ENCODE measurements at regions of chr3 and their contacts with region 1.

Region 1: DNA sequence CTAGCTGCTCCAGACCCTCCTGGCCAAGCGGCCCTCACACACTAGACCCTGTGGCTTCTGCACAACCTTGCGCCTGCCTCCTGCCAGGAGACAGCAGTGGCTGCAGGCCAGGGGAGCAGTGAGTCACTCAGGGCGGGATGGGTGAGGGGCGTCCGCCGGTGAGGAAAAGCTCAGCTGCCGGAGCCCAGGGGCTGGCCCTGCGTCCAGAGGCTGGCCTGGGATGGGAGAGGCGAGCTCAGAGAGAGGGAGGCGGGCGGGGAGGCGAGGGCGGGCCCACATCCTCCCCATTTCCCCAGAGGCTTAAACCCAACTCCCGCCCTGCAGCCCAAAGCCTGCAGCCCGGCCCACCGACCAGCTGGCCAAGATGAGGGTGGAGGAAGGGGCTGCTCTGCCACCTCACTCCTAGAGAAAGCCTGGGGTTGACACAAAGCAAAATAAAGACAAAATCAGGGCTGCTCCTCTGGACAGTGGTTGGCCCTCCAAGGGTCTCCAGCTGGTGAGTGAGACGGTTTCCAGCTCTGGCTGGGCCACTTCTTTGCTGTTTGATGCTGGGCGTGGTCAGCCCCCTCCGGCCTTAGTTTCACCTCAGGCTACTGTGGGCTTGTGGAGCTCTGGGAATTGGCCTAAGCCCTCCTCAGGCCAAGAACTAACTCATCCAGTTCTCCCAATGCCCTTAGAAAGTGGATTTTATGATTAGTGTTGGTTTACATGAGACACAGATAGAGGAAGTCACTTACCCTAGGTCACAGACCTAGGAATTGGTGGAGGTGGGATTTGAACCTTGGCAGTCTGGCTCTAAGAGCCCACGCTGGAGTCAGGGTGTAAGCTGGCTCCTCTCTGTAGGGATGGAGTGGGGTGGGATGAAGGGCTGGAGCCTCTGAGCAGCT is 50.6 kb downstream of the IQSEC1 start:
- DNase-seq: peak; percentile 70
- ATAC-seq: peak; percentile 57
- H3K4me3 Mint-ChIP-seq: peak overlapping the region; percentile 100
- H3K27ac Mint-ChIP-seq: peak overlapping the region; percentile 94
- H3K4me1 Mint-ChIP-seq: peaks cover 81% of the 10 kb centered on the region
- H3K27me3 Mint-ChIP-seq: no peaks in the 10 kb centered on the region
- CTCF ChIP-seq: no peak

Region 2: GRCh38 chr3:12591997-12592715 is 430.4 kb before region 1 on chr3:
- CTCF ChIA-PET with region 1: no interaction called
- POLR2A ChIA-PET with region 1: no interaction called
- intact Hi-C with region 1: no loop called
- DNase-seq: no peak
- ATAC-seq: no peak
- H3K4me3 Mint-ChIP-seq: no peak overlapping the region
- H3K27ac Mint-ChIP-seq: no peak overlapping the region
- H3K4me1 Mint-ChIP-seq: peaks cover 15% of the 10 kb centered on the region
- H3K27me3 Mint-ChIP-seq: no peaks in the 10 kb centered on the region
- CTCF ChIP-seq: no peak

Region 3: GRCh38 chr3:12967606-12968351 is 54.8 kb before region 1 on chr3:
- CTCF ChIA-PET with region 1: no interaction called
- POLR2A ChIA-PET with region 1: interaction called, 4 read pairs
- intact Hi-C with region 1: loop called (anchors 1 kb)
- DNase-seq: peak; percentile 77
- ATAC-seq: peak; percentile 96
- H3K4me3 Mint-ChIP-seq: peak overlapping the region; percentile 72
- H3K27ac Mint-ChIP-seq: peak overlapping the region; percentile 20
- H3K4me1 Mint-ChIP-seq: peaks cover 86% of the 10 kb centered on the region
- H3K27me3 Mint-ChIP-seq: no peaks in the 10 kb centered on the region
- CTCF ChIP-seq: no peak

Region 4: GRCh38 chr3:13002398-13003124 is 20.0 kb before region 1 on chr3:
- CTCF ChIA-PET with region 1: no interaction called
- POLR2A ChIA-PET with region 1: interaction called, 465 read pairs
- intact Hi-C with region 1: loop called (anchors 1 kb)
- DNase-seq: no peak
- ATAC-seq: peak; percentile 64
- H3K4me3 Mint-ChIP-seq: peak overlapping the region; percentile 64
- H3K27ac Mint-ChIP-seq: peak overlapping the region; percentile 89
- H3K4me1 Mint-ChIP-seq: peaks cover 96% of the 10 kb centered on the region
- H3K27me3 Mint-ChIP-seq: no peaks in the 10 kb centered on the region
- CTCF ChIP-seq: no peak

Region 5: DNA sequence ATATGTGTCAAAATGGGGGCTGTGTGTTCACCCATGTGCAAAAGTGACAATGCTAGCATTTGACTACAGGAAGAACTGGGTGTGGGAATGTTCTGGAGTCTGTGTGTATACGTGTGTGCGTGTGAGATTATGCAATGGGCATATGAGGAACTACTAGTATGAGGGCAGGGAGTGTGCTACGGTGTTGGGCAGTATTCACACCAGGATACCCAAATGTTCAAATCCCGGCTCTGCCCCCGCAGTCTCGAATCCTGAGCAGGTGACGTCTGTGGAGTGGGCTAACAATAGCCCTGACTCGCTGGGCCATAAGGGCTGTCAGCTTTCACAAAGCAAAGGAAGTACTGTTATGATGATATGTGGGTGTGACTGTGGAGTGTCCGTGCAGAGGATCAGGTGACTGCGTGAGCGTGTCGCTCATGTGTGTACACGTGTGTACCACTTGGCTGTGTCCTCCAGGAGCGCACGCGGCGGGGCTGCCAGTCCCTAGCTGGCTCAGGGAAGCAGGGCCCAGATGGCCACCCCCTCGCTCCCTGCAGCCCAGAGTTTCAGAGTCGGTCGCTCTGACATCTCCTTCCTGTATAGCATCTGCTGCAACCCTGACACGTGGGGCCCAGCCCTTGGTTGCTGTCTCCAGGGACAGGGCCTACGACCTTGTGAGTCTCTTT is 23.4 kb after region 1 on chr3:
- CTCF ChIA-PET with region 1: interaction called, 10 read pairs
- POLR2A ChIA-PET with region 1: interaction called, 170 read pairs
- intact Hi-C with region 1: loop called (anchors 1 kb)
- DNase-seq: peak; percentile 61
- ATAC-seq: peak; percentile 90
- H3K4me3 Mint-ChIP-seq: peak overlapping the region; percentile 62
- H3K27ac Mint-ChIP-seq: peak overlapping the region; percentile 90
- H3K4me1 Mint-ChIP-seq: peaks cover 74% of the 10 kb centered on the region
- H3K27me3 Mint-ChIP-seq: no peaks in the 10 kb centered on the region
- CTCF ChIP-seq: no peak

Region 6: GRCh38 chr3:13083898-13084297 is 61.3 kb after region 1 on chr3:
- CTCF ChIA-PET with region 1: interaction called, 4 read pairs
- POLR2A ChIA-PET with region 1: interaction called, 291 read pairs
- intact Hi-C with region 1: loop called (anchors 1 kb)
- DNase-seq: peak; percentile 63
- ATAC-seq: peak; percentile 76
- H3K4me3 Mint-ChIP-seq: peak overlapping the region; percentile 72
- H3K27ac Mint-ChIP-seq: peak overlapping the region; percentile 92
- H3K4me1 Mint-ChIP-seq: peaks cover 92% of the 10 kb centered on the region
- H3K27me3 Mint-ChIP-seq: no peaks in the 10 kb centered on the region
- CTCF ChIP-seq: no peak

Region 7: DNA sequence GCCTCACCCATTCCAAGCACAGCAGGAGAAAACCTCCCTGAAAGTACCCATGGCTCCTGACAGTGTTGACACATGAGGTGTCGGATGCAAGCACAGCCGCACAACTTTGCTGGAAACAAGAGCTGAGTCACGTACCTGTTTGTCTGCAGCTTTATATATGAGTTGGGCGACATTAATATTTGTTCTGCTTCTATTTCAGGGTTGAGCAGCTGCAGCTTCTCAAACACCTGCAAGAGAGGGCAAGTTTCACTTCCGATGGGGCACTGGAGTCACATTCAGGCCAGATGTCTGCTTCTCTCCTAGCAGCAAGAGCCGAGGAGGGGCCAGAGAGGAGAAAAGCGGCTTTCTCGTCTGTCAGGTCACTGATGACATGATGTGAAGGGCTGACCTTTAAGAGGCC is 309.6 kb after region 1 on chr3:
- CTCF ChIA-PET with region 1: no interaction called
- POLR2A ChIA-PET with region 1: interaction called, 15 read pairs
- intact Hi-C with region 1: loop called (anchors 2 kb)
- DNase-seq: peak; percentile 48
- ATAC-seq: peak; percentile 91
- H3K4me3 Mint-ChIP-seq: peak overlapping the region; percentile 56
- H3K27ac Mint-ChIP-seq: peak overlapping the region; percentile 88
- H3K4me1 Mint-ChIP-seq: peaks cover 39% of the 10 kb centered on the region
- H3K27me3 Mint-ChIP-seq: no peaks in the 10 kb centered on the region
- CTCF ChIP-seq: no peak

Region 8: GRCh38 chr3:13452490-13453335 is 430.1 kb after region 1 on chr3:
- CTCF ChIA-PET with region 1: no interaction called
- POLR2A ChIA-PET with region 1: interaction called, 14 read pairs
- intact Hi-C with region 1: loop called (anchors 2 kb)
- DNase-seq: peak; percentile 28
- ATAC-seq: no peak
- H3K4me3 Mint-ChIP-seq: peak overlapping the region; percentile 84
- H3K27ac Mint-ChIP-seq: peak overlapping the region; percentile 89
- H3K4me1 Mint-ChIP-seq: peaks cover 18% of the 10 kb centered on the region
- H3K27me3 Mint-ChIP-seq: no peaks in the 10 kb centered on the region
- CTCF ChIP-seq: no peak

Measured in activated B cell treated with CpG ODN at 0.5 μM for 24 hours (primary cell).